A549 (cell line): ENCODE measurements at regions of chr10 and their contacts with region 1.

Region 1: DNA sequence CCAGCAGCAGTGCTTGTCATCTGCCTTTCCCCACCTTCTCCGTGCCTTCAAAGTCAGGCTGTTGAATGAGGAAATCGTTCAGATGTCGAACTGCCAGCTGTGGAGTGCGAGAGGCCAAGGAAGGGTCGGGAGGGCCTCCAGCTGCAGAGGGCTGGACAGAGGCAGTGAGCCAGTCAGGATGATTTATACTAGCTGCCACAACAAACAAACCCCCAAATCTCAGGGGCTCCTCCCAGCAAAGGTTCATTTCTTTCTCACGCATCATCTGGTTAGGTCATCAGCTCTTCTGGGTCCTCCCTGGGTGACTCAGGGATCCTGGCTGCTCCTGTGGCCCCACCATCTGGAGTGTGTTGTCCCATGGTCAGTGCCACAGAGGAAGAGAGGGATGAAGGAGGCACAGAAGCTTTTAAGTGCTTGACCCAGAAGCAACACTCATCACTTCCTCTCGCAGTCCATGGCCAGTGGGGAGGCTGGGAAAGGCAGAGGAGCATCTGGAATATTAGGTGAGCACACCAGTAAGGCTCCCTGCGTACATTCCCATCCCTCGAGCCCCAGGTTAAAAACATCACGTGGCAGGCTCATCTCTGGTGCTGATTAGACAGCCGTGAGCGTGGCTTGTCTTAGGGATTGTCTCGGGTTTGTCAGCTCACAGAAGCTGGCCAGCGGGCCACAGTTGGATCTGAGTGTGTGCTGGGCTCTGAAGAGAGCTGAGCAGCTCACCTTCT is 140.7 kb downstream of the RGS10 start:
- DNase-seq: peak; percentile 77 to 89
- ATAC-seq: peak; percentile 85 to 89
- H3K4me3 ChIP-seq: no peak overlapping the region
- H3K27ac ChIP-seq: peak overlapping the region; percentile 23 to 76; a peak in 4 of 6 replicates
- H3K4me1 ChIP-seq: peaks cover 15% of the 10 kb centered on the region
- CTCF ChIP-seq: no peak
- EP300 ChIP-seq: no peak
- POLR2A ChIP-seq: no peak
- RAD21 ChIP-seq: no peak

Region 2: DNA sequence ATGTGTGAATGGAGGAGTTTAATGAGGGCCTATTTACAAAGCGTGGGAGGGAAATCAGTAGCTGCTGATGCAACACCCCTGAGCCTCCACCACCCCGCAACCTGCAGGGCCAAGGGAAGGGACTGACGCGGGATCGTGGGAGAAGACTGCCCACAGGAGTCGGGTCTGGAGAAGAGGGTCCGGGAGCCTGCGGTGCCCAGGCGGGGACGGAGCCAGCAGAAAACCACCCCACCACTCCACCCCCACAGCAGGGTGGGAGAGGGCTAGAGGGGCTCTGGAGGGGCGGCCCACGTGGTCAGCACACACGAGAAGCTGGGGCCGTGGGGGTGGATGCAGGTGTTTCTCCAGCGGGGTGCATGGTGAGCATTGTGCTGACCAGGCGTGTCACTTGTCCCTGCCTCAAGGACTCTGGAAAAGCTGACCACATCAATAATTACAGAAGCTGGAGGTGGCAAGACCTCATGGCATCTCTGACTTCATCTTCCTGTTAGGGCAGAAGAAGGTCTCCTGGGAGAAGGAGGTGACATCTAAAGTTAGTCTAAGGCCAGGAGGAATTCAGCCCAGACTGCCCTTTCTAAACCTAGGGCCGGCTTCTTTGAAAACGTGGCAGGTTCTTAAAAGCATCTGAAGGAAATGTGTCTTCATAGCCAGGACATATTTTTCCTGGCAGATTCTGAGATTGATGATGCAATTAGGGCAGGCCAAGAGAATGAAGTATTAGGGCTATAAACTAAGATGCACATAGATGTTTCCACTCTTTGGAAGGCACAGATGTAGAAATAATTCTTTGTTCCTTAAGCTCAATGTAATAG is 10.2 kb before region 1 on chr10:
- CTCF ChIA-PET with region 1: interaction called, 10 read pairs
- POLR2A ChIA-PET with region 1: no interaction called
- DNase-seq: no peak
- ATAC-seq: no peak
- H3K4me3 ChIP-seq: no peak overlapping the region
- H3K27ac ChIP-seq: no peak overlapping the region
- H3K4me1 ChIP-seq: no peaks in the 10 kb centered on the region
- CTCF ChIP-seq: no peak
- EP300 ChIP-seq: no peak
- POLR2A ChIP-seq: no peak
- RAD21 ChIP-seq: no peak

Region 3: DNA sequence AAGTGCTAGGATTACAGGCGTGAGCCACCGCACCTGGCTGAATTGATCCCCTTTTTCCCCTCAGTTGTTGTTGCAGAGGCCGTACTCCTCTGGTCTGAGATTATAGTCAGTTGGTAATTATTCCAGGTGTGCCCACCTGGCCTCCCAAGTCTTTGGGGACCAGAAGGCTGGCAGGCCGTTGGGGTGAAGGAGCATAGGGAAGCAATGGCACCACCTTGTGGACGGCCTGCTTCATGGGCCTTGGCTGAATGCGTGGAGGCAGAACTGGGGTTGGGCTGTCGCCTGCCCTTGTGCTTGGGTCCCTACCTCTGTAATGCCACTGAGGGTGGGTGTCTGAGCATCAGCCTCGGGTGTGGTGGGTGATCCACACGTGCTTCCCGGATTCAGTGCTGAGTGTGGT is 15.0 kb after region 1 on chr10:
- CTCF ChIA-PET with region 1: interaction called, 16 read pairs
- POLR2A ChIA-PET with region 1: no interaction called
- DNase-seq: peak; percentile 62 to 90
- ATAC-seq: peak; percentile 81 to 93
- H3K4me3 ChIP-seq: no peak overlapping the region
- H3K27ac ChIP-seq: peak overlapping the region in 1 of 2 experiments; percentile 53; a peak in 1 of 6 replicates
- H3K4me1 ChIP-seq: no peaks in the 10 kb centered on the region
- CTCF ChIP-seq: peak; percentile 82
- EP300 ChIP-seq: no peak
- POLR2A ChIP-seq: no peak
- RAD21 ChIP-seq: peak; percentile 93 to 95